ENCODE measurements at regions of chr16 and their contacts with region 1.

Region 1: DNA sequence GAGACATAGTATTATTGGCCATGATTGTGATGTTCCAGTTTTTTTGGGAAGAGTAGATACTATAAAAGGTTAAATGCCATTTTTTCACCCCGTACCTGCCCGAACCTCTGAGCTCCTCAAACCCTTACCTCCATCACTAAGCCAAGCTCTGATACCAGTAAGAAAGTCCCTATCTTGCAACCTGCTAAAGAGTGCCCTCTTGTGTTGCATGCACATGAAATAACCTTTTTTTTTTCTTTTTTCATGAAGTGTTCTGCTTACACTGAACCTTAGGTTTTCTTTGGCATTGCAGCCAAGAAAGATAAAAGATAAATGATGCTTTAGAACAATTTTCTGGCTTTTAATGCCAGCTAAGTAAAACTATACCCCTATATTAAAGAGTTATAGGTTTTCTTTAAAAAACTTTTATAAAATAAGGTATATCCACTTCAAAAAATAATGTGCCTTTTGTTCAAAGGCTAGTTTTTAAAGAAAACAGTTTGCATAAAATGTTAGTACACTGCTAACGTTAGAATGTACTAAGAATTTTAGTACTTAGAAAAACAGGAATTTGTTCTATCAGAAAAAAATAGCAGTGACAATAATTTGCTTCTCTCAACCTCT is 295.3 kb upstream of the PMFBP1 start:
- DNase-seq: no peak
- H3K4me3 ChIP-seq: no peak overlapping the region
- H3K27ac ChIP-seq: no peak overlapping the region
- H3K4me1 ChIP-seq: no peaks in the 10 kb centered on the region
- H3K27me3 ChIP-seq: no peaks in the 10 kb centered on the region
- CTCF ChIP-seq: peak in 3 of 4 experiments; percentile 16 to 26 (median 21)
- EP300 ChIP-seq: no peak
- POLR2A ChIP-seq: no peak

Region 2: GRCh38 chr16:72124761-72125634 is 342.3 kb before region 1 on chr16:
- intact Hi-C with region 1: loop called (anchors 10 kb)
- DNase-seq: peak; percentile 81
- H3K4me3 ChIP-seq: no peak overlapping the region
- H3K27ac ChIP-seq: peak overlapping the region in 2 of 4 donors; percentile 8 to 42
- H3K4me1 ChIP-seq: no peaks in the 10 kb centered on the region
- H3K27me3 ChIP-seq: no peaks in the 10 kb centered on the region
- CTCF ChIP-seq: peak; percentile 47 to 65 (median 57)
- EP300 ChIP-seq: no peak
- POLR2A ChIP-seq: no peak

Region 3: DNA sequence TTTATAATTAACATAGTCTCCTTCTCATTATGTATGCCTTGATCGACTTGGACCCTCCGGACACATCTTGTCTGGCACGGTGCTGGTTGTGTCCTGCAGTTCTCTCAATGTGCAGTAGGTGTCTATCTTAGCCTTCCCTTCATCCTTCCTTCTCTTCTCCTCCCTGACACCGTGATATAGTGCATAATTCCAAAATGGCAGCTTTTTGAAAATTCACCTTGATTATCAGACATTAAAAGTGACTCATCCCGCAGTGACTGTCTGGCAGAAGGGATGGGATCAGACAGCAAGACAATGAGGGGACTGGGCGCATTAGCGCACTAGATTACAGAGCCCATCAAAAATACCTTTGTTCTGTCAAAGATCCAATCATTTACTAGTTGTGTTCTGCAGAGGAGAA is 225.3 kb before region 1 on chr16:
- intact Hi-C with region 1: loop called (anchors 5 kb)
- DNase-seq: no peak
- H3K4me3 ChIP-seq: no peak overlapping the region
- H3K27ac ChIP-seq: no peak overlapping the region
- H3K4me1 ChIP-seq: no peaks in the 10 kb centered on the region
- H3K27me3 ChIP-seq: no peaks in the 10 kb centered on the region
- CTCF ChIP-seq: peak in 3 of 4 experiments; percentile 51 to 65 (median 59)
- EP300 ChIP-seq: no peak
- POLR2A ChIP-seq: no peak

Region 4: GRCh38 chr16:72434159-72434558 is 33.1 kb before region 1 on chr16:
- intact Hi-C with region 1: no loop called
- DNase-seq: no peak
- H3K4me3 ChIP-seq: no peak overlapping the region
- H3K27ac ChIP-seq: no peak overlapping the region
- H3K4me1 ChIP-seq: no peaks in the 10 kb centered on the region
- H3K27me3 ChIP-seq: no peaks in the 10 kb centered on the region
- CTCF ChIP-seq: no peak
- EP300 ChIP-seq: no peak
- POLR2A ChIP-seq: no peak

Region 5: DNA sequence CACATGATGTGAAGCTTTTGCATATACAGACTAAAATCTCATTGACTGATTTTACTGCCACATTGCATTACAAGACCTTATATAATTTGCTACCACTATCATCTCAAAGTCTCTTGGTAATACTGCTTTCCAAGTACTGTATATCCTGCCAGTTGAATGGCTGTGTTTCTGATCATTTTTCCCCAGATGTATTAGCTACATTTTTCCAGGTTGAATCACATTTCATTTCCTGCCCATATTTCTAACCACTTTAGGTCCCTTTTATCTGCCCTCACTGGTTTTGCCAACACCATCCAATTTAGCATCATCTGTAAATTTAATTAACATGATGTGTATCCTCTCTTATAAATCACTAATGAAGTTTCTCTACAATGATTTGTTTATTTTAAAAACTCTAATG is 70.4 kb after region 1 on chr16:
- intact Hi-C with region 1: no loop called
- DNase-seq: no peak
- H3K4me3 ChIP-seq: no peak overlapping the region
- H3K27ac ChIP-seq: no peak overlapping the region
- H3K4me1 ChIP-seq: peaks cover 0 to 3% (median 0%) of the 10 kb centered on the region in 4 donors
- H3K27me3 ChIP-seq: no peaks in the 10 kb centered on the region
- CTCF ChIP-seq: no peak
- EP300 ChIP-seq: no peak
- POLR2A ChIP-seq: no peak

Region 6: GRCh38 chr16:73166441-73166851 is 699.2 kb after region 1 on chr16:
- intact Hi-C with region 1: no loop called
- DNase-seq: peak; percentile 66
- H3K4me3 ChIP-seq: peak overlapping the region in 3 of 4 donors; percentile 5 to 17 (median 15)
- H3K27ac ChIP-seq: peak overlapping the region; percentile 17 to 56 (median 51)
- H3K4me1 ChIP-seq: peaks cover 0 to 6% (median 2%) of the 10 kb centered on the region in 4 donors
- H3K27me3 ChIP-seq: no peaks in the 10 kb centered on the region
- CTCF ChIP-seq: no peak
- EP300 ChIP-seq: no peak
- POLR2A ChIP-seq: no peak

Measured in sigmoid colon (tissue), 7 donors.